Left ventricle myocardium inferior (tissue), 1 donor: ENCODE measurements at regions of chr12 and their contacts with region 1.

Region 1: GRCh38 chr12:109385339-109386067 is 37.8 kb downstream of the MYO1H start:
- DNase-seq: no peak
- H3K4me3 ChIP-seq: peak overlapping the region; percentile 28
- H3K27ac ChIP-seq: peak overlapping the region; percentile 28
- H3K4me1 ChIP-seq: peaks cover 6% of the 10 kb centered on the region
- H3K27me3 ChIP-seq: no peaks in the 10 kb centered on the region
- CTCF ChIP-seq: peak; percentile 64

Region 2: DNA sequence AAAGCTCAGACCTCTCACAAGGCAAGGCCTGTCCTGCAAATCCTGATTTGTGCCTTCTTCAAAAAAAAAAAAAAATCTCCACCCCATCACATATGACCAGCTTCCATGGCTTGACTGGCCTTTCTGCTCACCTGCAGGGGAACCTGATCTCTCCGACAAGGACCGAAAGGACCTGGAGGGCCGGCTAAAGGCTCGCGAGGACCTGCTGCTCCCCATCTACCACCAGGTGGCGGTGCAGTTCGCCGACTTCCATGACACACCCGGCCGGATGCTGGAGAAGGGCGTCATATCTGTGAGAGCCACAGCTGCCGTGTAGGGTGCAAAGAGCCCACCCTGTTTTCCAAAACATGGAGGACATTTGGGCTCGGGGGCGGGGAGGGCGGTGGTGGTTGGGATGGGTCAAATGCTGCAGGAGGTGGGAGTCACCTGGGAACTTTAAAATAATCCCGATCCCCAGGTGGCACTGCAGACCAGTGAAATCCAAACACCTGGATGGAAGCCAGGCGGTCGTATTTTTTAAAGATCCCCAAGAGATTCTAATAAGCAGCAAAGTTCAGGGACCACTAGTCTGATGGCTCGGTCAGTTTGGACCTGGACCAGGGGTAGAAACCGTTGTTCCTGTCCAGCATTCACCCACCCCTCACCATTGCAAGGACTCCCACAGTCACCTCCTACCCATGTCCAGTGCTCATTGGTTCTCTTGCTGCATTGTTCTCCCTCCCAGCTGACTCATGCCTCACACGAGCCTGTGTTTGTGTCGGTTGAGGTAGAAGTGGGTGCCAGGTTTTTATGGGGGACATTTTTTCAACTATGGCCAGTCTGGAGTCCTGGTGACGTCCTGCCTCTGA is 121.2 kb before region 1 on chr12:
- intact Hi-C with region 1: loop called (anchors 5 kb)
- DNase-seq: peak; percentile 70
- H3K4me3 ChIP-seq: peak overlapping the region; percentile 20
- H3K27ac ChIP-seq: peak overlapping the region; percentile 65
- H3K4me1 ChIP-seq: peaks cover 13% of the 10 kb centered on the region
- H3K27me3 ChIP-seq: no peaks in the 10 kb centered on the region
- CTCF ChIP-seq: peak; percentile 81

Region 3: GRCh38 chr12:109291521-109292341 is 93.8 kb before region 1 on chr12:
- intact Hi-C with region 1: no loop called
- DNase-seq: peak; percentile 74
- H3K4me3 ChIP-seq: peak overlapping the region; percentile 62
- H3K27ac ChIP-seq: peak overlapping the region; percentile 67
- H3K4me1 ChIP-seq: peaks cover 13% of the 10 kb centered on the region
- H3K27me3 ChIP-seq: peaks cover 14% of the 10 kb centered on the region
- CTCF ChIP-seq: no peak